ENCODE measurements at regions of chr11 and their contacts with region 1.

Region 1: GRCh38 chr11:134050541-134051383 is 18.1 kb upstream of the JAM3 start:
- DNase-seq: peak; percentile 68 to 77 (median 70)
- H3K4me3 ChIP-seq: no peak overlapping the region
- H3K4me3 Mint-ChIP-seq: peak overlapping the region in 2 of 8 donors; percentile 36 to 65
- H3K27ac ChIP-seq: no peak overlapping the region
- H3K27ac Mint-ChIP-seq: peak overlapping the region in 1 of 7 donors; percentile 22
- H3K4me1 ChIP-seq: peaks cover 11% of the 10 kb centered on the region
- H3K4me1 Mint-ChIP-seq: peaks cover 0 to 4% (median 2%) of the 10 kb centered on the region in 4 donors
- H3K27me3 ChIP-seq: no peaks in the 10 kb centered on the region
- H3K27me3 Mint-ChIP-seq: peaks cover 17 to 23% of the 10 kb centered on the region in 2 donors

Region 2: DNA sequence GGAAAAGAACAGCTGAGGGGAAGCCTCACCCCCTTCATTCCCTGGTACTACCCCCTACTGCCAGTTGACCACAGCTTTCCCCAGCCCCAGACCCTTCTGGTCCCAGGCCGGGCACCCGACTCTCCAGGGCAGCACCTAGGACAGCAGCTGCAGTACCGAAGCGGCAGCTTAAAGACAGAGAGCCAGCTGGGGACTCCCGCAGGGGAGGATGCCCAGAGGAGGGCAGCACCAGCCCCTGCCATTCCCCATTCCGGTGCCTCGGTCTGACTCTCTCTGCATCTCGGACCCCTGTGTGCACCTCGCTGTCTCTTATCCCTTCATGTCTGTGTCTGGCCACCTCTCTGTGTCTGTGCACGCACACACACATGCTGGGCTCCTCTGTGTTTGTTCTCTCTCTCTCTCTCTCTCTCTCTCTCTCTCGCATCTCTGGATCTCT is 103.4 kb before region 1 on chr11:
- CTCF ChIA-PET with region 1: interaction called, 16 read pairs
- POLR2A ChIA-PET with region 1: interaction called, 5 read pairs
- intact Hi-C with region 1: loop called (anchors 5 kb)
- DNase-seq: peak; percentile 70 to 81 (median 78)
- H3K4me3 ChIP-seq: peak overlapping the region; percentile 9 to 38
- H3K4me3 Mint-ChIP-seq: peak overlapping the region; percentile 56 to 90 (median 80)
- H3K27ac ChIP-seq: peak overlapping the region; percentile 12
- H3K27ac Mint-ChIP-seq: peak overlapping the region; percentile 81 to 97 (median 92)
- H3K4me1 ChIP-seq: peaks cover 73% of the 10 kb centered on the region
- H3K4me1 Mint-ChIP-seq: peaks cover 43 to 81% (median 62%) of the 10 kb centered on the region in 4 donors
- H3K27me3 ChIP-seq: no peaks in the 10 kb centered on the region
- H3K27me3 Mint-ChIP-seq: peaks cover 0 to 10% of the 10 kb centered on the region in 2 donors

Region 3: GRCh38 chr11:134026655-134027343 is 24.0 kb before region 1 on chr11:
- CTCF ChIA-PET with region 1: interaction called, 19 read pairs
- POLR2A ChIA-PET with region 1: interaction called, 5 read pairs
- intact Hi-C with region 1: no loop called
- DNase-seq: no peak
- H3K4me3 ChIP-seq: no peak overlapping the region
- H3K4me3 Mint-ChIP-seq: peak overlapping the region in 4 of 8 donors; percentile 1 to 69 (median 52)
- H3K27ac ChIP-seq: no peak overlapping the region
- H3K27ac Mint-ChIP-seq: peak overlapping the region in 5 of 7 donors; percentile 14 to 89 (median 61)
- H3K4me1 ChIP-seq: peaks cover 24% of the 10 kb centered on the region
- H3K4me1 Mint-ChIP-seq: peaks cover 20 to 38% (median 29%) of the 10 kb centered on the region in 4 donors
- H3K27me3 ChIP-seq: no peaks in the 10 kb centered on the region
- H3K27me3 Mint-ChIP-seq: peaks cover 0 to 4% of the 10 kb centered on the region in 2 donors

Region 4: GRCh38 chr11:134040386-134041302 is 10.1 kb before region 1 on chr11:
- CTCF ChIA-PET with region 1: interaction called, 30 read pairs
- POLR2A ChIA-PET with region 1: interaction called, 7 read pairs
- intact Hi-C with region 1: loop called (anchors 2 kb)
- DNase-seq: no peak
- H3K4me3 ChIP-seq: no peak overlapping the region
- H3K4me3 Mint-ChIP-seq: peak overlapping the region in 2 of 8 donors; percentile 15 to 26
- H3K27ac ChIP-seq: no peak overlapping the region
- H3K27ac Mint-ChIP-seq: peak overlapping the region in 3 of 7 donors; percentile 0 to 57 (median 23)
- H3K4me1 ChIP-seq: peaks cover 18% of the 10 kb centered on the region
- H3K4me1 Mint-ChIP-seq: peaks cover 8 to 23% (median 14%) of the 10 kb centered on the region in 4 donors
- H3K27me3 ChIP-seq: no peaks in the 10 kb centered on the region
- H3K27me3 Mint-ChIP-seq: peaks cover 0 to 3% of the 10 kb centered on the region in 2 donors

Region 5: DNA sequence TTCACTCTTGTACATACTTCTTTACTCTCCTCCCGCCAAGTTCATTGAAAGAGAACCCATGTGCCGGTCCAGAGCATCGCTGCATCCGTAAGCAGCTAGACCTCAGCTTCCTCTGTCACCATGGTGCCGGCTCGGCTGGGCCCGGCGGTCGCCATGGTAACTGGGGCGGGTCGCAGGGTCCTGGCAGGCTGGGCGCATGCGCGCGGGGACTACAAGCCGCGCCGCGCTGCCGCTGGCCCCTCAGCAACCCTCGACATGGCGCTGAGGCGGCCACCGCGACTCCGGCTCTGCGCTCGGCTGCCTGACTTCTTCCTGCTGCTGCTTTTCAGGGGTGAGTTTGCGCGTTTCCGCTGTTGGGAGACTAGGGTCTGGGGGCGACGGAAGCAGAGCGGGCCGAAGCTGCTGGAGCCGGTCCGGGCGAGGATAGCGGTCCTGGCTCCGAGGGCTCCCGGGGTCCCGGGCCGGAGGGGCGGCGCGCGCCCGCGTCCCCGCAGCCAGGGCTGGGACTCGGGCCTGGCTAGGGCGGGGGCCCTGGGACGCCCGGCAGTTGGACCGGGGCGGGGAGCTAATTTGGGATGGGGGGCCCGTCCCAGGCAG is 18.2 kb after region 1 on chr11 and contains the start of gene JAM3:
- CTCF ChIA-PET with region 1: interaction called, 52 read pairs
- POLR2A ChIA-PET with region 1: no interaction called
- intact Hi-C with region 1: no loop called
- DNase-seq: peak; percentile 96 to 98 (median 97)
- H3K4me3 ChIP-seq: peak within 1 kb of the TSS in 1 of 2 donors; percentile 48
- H3K4me3 Mint-ChIP-seq: peak within 1 kb of the TSS; percentile 87 to 95 (median 92)
- H3K27ac ChIP-seq: no peak within 1 kb of the TSS
- H3K27ac Mint-ChIP-seq: peak within 1 kb of the TSS; percentile 72 to 98 (median 97)
- H3K4me1 ChIP-seq: peaks cover 7% of the 10 kb centered on the region
- H3K4me1 Mint-ChIP-seq: peaks cover 5 to 14% (median 9%) of the 10 kb centered on the region in 4 donors
- H3K27me3 ChIP-seq: no peaks in the 10 kb centered on the region
- H3K27me3 Mint-ChIP-seq: peaks cover 2 to 5% of the 10 kb centered on the region in 2 donors
- total RNA-seq, gene JAM3: 6.8 to 8.3 TPM

Region 6: GRCh38 chr11:134134167-134134566 is 83.4 kb after region 1 on chr11:
- CTCF ChIA-PET with region 1: interaction called, 43 read pairs
- POLR2A ChIA-PET with region 1: no interaction called
- intact Hi-C with region 1: loop called (anchors 1 kb)
- DNase-seq: no peak
- H3K4me3 ChIP-seq: no peak overlapping the region
- H3K4me3 Mint-ChIP-seq: no peak overlapping the region
- H3K27ac ChIP-seq: no peak overlapping the region
- H3K27ac Mint-ChIP-seq: no peak overlapping the region
- H3K4me1 ChIP-seq: no peaks in the 10 kb centered on the region
- H3K4me1 Mint-ChIP-seq: peaks cover 0 to 2% (median under 1%) of the 10 kb centered on the region in 4 donors
- H3K27me3 ChIP-seq: no peaks in the 10 kb centered on the region
- H3K27me3 Mint-ChIP-seq: no peaks in the 10 kb centered on the region

Region 7: GRCh38 chr11:134159652-134160051 is 108.9 kb after region 1 on chr11:
- CTCF ChIA-PET with region 1: interaction called, 13 read pairs
- POLR2A ChIA-PET with region 1: no interaction called
- intact Hi-C with region 1: no loop called
- DNase-seq: no peak
- H3K4me3 ChIP-seq: no peak overlapping the region
- H3K4me3 Mint-ChIP-seq: no peak overlapping the region
- H3K27ac ChIP-seq: no peak overlapping the region
- H3K27ac Mint-ChIP-seq: no peak overlapping the region
- H3K4me1 ChIP-seq: no peaks in the 10 kb centered on the region
- H3K4me1 Mint-ChIP-seq: peaks cover 0 to 6% (median 0%) of the 10 kb centered on the region in 4 donors
- H3K27me3 ChIP-seq: no peaks in the 10 kb centered on the region
- H3K27me3 Mint-ChIP-seq: no peaks in the 10 kb centered on the region